GM12878 (cell line): ENCODE measurements at regions of chr3 and their contacts with region 1.

Region 1: GRCh38 chr3:182909318-182910040 is 70.9 kb downstream of the DCUN1D1 start:
- DNase-seq: no peak
- ATAC-seq: peak; percentile 31; the same call in 2 of the 3 replicates
- H3K4me3 ChIP-seq: no peak overlapping the region
- H3K27ac ChIP-seq: no peak overlapping the region
- H3K4me1 ChIP-seq: peaks cover 11% of the 10 kb centered on the region
- H3K27me3 ChIP-seq: no peaks in the 10 kb centered on the region
- CTCF ChIP-seq: peak; percentile 34 to 49 (median 48); a peak in 5 of 6 replicates
- EP300 ChIP-seq: no peak
- POLR2A ChIP-seq: no peak
- RAD21 ChIP-seq: peak; percentile 45; the same call in 1 of the 2 replicates

Region 2: DNA sequence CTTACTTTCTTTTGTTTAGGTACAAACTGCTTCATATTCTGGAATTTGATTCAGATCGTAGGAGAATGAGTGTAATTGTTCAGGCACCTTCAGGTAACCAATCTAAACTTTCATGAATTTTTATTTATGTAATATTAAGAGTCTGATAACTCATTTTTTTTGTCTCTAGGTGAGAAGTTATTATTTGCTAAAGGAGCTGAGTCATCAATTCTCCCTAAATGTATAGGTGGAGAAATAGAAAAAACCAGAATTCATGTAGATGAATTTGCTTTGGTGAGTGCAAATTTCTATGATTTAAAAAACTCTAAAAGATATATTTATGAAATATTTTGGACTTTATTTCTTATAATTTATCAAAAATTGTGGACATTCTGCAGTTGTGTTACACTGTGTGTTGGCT is 40.4 kb before region 1 on chr3:
- CTCF ChIA-PET with region 1: no interaction called
- POLR2A ChIA-PET with region 1: no interaction called
- RAD21 ChIA-PET with region 1: no interaction called
- SMC1A ChIA-PET with region 1: no interaction called
- in situ Hi-C with region 1: no loop called
- intact Hi-C with region 1: no loop called
- DNase-seq: no peak
- ATAC-seq: no peak
- H3K4me3 ChIP-seq: no peak overlapping the region
- H3K27ac ChIP-seq: no peak overlapping the region
- H3K4me1 ChIP-seq: no peaks in the 10 kb centered on the region
- H3K27me3 ChIP-seq: no peaks in the 10 kb centered on the region
- CTCF ChIP-seq: no peak
- EP300 ChIP-seq: no peak
- POLR2A ChIP-seq: no peak
- RAD21 ChIP-seq: no peak

Region 3: DNA sequence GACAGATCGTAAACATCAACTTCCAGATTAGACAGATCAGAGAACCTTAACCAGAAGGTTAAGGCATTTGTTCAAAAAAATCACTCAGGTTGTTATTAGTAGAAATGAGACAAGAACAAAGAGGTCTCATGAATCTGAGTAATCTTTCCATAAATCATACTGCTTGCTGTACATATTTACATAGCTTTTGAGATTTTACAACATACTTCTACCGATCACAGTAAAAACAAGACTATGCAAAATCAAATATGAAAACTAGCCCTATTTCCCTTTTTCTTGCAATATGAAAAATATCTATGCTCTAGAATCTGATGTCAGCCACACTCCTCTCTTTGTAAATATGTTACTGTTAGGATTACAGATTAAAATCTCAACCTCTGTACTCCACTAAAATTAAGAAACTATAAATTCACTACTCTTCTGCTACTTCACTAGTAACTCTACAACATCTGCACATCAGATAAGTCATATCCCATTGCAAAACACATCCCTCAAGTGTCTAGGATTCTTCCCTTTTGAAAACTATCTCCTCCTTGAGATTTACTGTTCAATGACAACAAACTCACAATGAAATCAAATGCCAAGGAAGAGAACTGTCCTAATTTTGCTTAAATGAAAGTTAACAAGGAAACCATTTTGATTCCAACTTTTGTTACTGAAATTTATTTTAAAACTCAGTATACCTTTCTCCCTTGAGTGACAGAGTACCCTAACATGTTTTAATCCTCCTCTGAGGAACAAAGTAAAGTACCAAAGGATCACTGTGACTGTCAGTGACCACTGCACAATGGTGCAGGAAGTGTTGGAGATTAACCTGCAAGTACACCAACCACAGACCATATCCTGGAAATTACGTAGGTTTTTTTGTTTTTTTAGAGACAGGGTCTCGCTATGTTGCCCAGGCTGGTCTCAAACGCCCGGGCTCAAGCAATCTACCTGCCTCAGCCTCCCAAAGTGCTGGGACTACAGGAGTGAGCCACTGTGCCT is 58.0 kb after region 1 on chr3:
- CTCF ChIA-PET with region 1: interaction called, 4 read pairs
- POLR2A ChIA-PET with region 1: no interaction called
- RAD21 ChIA-PET with region 1: interaction called, 4 read pairs
- SMC1A ChIA-PET with region 1: interaction called, 6 read pairs
- in situ Hi-C with region 1: no loop called
- intact Hi-C with region 1: loop called (anchors 2 kb)
- DNase-seq: no peak
- ATAC-seq: peak; percentile 68
- H3K4me3 ChIP-seq: peak overlapping the region; percentile 53
- H3K27ac ChIP-seq: peak overlapping the region; percentile 75
- H3K4me1 ChIP-seq: peaks cover 27% of the 10 kb centered on the region
- H3K27me3 ChIP-seq: no peaks in the 10 kb centered on the region
- CTCF ChIP-seq: no peak
- EP300 ChIP-seq: no peak
- POLR2A ChIP-seq: no peak
- RAD21 ChIP-seq: no peak

Region 4: DNA sequence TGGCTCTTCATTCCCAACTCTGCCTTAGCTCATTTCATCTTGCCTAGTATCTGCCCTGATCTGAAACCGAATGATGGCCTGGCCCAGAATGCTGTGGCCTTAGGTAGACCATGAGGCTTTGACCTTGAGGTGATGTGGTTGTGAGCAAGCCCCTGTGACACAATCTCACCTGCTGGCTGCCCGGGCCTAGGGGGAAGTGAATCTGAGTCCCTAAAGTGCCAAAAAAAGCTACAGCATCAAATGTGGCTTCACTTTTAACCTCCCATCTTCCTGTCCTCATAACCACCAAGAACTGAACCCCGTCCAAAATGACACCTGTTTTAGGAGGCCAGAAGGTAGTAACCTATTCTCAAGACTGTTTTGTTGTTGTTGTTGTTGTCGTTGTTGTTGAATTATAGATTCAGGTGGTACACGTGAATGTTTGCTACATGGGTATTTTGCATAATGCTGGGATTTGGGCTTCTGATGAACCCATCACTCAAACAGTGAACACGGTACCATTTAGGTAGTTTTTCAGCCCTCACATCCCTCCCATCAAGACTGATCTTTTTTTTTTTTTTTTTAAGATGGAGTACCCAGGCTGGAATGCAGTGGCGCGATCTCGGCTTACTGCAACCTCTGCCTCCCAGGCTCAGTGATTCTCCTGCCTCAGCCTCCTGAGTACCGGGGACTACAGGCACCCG is 135.2 kb after region 1 on chr3:
- CTCF ChIA-PET with region 1: interaction called, 3 read pairs
- POLR2A ChIA-PET with region 1: interaction called, 3 read pairs
- RAD21 ChIA-PET with region 1: interaction called, 3 read pairs
- SMC1A ChIA-PET with region 1: interaction called, 13 read pairs
- in situ Hi-C with region 1: no loop called
- intact Hi-C with region 1: no loop called
- DNase-seq: peak; percentile 90
- ATAC-seq: peak; percentile 95
- H3K4me3 ChIP-seq: no peak overlapping the region
- H3K27ac ChIP-seq: peak overlapping the region; percentile 2; the same call in 1 of the 2 replicates
- H3K4me1 ChIP-seq: peaks cover 44% of the 10 kb centered on the region
- H3K27me3 ChIP-seq: no peaks in the 10 kb centered on the region
- CTCF ChIP-seq: no peak
- EP300 ChIP-seq: peak; percentile 83 to 85
- POLR2A ChIP-seq: no peak
- RAD21 ChIP-seq: 0 out of 2 replicates have a peak, but pooled peaks have one; percentile 11

Region 5: GRCh38 chr3:183099026-183099837 is 189.8 kb after region 1 on chr3 and contains the start of gene MCCC1:
- CTCF ChIA-PET with region 1: interaction called, 8 read pairs
- POLR2A ChIA-PET with region 1: interaction called, 3 read pairs
- RAD21 ChIA-PET with region 1: interaction called, 3 read pairs
- SMC1A ChIA-PET with region 1: interaction called, 6 read pairs
- in situ Hi-C with region 1: no loop called
- intact Hi-C with region 1: loop called (anchors 5 kb)
- DNase-seq: peak; percentile 94
- ATAC-seq: peak; percentile 98
- H3K4me3 ChIP-seq: peak within 1 kb of the TSS; percentile 93
- H3K27ac ChIP-seq: peak within 1 kb of the TSS; percentile 92
- H3K4me1 ChIP-seq: peaks cover 4% of the 10 kb centered on the region
- H3K27me3 ChIP-seq: no peaks in the 10 kb centered on the region
- CTCF ChIP-seq: no peak; a peak in 1 of 6 replicates
- EP300 ChIP-seq: peak in 1 of 2 experiments; percentile 44; a peak in 1 of 4 replicates
- POLR2A ChIP-seq: peak; percentile 94
- RAD21 ChIP-seq: no peak
- polyA plus RNA-seq, gene MCCC1: 35.0 to 38.7 TPM